ENCODE measurements at regions of chr1 and their contacts with region 1.

Region 1: DNA sequence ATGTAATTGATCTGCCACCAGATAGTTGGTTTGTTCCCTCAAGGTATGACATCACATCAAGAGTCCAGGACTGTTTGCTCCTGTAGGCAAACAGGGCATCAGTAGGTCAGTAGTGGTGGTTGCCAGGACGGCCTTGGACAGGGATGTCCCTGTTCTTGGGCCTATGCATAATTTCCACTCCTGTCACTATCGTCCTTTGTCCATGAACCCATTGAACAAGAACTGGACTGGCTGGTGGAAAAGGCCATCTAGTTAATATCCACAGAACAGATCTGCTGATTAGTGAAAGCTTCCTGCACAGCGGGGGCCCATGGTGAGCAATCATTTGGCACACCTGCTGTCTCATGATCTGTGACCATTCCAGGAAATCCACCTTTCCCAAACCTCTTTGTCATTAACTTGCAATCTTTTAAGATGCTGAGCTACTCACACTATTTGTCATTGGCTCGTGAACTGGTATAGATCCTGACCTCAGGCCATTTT is 12.4 kb upstream of the BSDC1 start:
- DNase-seq: peak; percentile 37
- H3K4me3 ChIP-seq: no peak overlapping the region
- H3K27ac ChIP-seq: no peak overlapping the region
- H3K4me1 ChIP-seq: no peaks in the 10 kb centered on the region
- H3K27me3 ChIP-seq: no peaks in the 10 kb centered on the region
- CTCF ChIP-seq: no peak

Region 2: GRCh38 chr1:32464716-32465577 is 58.3 kb after region 1 on chr1 and contains the start of gene ZBTB8B:
- CTCF ChIA-PET with region 1: no interaction called
- dilution Hi-C with region 1: loop called (anchors 5 kb)
- in situ Hi-C with region 1: no loop called
- intact Hi-C with region 1: no loop called
- DNase-seq: peak; percentile 70
- H3K4me3 ChIP-seq: peak within 1 kb of the TSS; percentile 39 to 61 (median 55)
- H3K27ac ChIP-seq: no peak within 1 kb of the TSS
- H3K4me1 ChIP-seq: peaks cover 16% of the 10 kb centered on the region
- H3K27me3 ChIP-seq: peaks cover 2% of the 10 kb centered on the region
- CTCF ChIP-seq: no peak
- total RNA-seq, gene ZBTB8B: under 0.01 TPM in 1 of 2 donors, not detected in the other

Measured in mammary epithelial cell (primary cell).